ENCODE measurements at regions of chr11 and their contacts with region 1.

Region 1: DNA sequence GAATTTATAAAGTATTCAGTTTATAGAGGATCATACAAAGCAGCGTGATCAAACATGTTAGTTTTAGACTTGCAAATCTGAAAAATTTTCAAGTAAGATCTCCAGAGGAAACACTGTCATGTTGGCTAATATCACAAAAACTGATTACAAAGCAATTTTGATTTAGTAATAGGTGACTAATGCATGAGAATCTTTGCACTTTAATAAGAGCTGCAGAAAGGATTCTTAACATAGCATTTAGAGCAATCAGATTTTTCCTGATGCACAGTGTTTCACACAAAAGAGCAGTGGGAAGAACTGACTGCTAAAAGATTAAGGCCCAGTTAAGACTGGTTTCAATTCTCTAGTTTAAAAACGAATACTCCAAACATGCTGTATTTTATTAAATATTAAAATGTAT is 321.2 kb downstream of the GUCY1A2 start:
- DNase-seq: no peak
- ATAC-seq: no peak
- H3K4me3 ChIP-seq: no peak overlapping the region
- H3K27ac ChIP-seq: no peak overlapping the region
- H3K4me1 ChIP-seq: no peaks in the 10 kb centered on the region
- H3K27me3 ChIP-seq: no peaks in the 10 kb centered on the region
- CTCF ChIP-seq: no peak

Region 2: DNA sequence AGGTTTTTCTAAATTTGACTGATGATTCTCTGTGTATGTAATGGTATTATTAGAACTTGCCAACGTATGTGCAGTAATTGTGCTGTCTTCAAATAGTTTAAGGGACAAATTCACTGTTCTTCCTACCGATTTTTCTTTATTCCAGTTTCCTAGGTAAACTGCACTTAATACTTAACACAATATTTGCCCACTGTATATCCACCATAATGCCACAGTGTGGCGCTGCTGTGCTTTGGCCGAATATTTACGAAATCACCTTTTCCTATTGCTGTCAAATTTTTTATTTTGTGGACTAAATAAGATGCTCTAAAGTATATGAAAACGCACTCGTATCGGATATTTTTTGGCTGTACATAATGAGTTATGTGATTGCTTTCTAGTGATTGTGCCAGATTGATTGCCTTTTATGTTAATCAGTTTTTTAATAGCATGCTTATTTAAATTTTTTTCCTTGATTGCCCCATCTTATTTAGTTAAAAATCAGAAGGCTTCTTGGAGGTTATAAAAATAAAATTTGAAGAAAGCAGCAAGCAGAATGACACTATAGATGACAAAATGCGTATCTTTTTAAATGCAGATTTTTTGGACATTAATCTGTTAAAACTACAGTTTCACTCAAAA is 609.1 kb before region 1 on chr11:
- CTCF ChIA-PET with region 1: no interaction called
- POLR2A ChIA-PET with region 1: no interaction called
- in situ Hi-C with region 1: no loop called
- intact Hi-C with region 1: loop called (anchors 10 kb)
- DNase-seq: peak; percentile 32
- ATAC-seq: 0 out of 2 replicates have a peak, but pooled peaks have one; percentile 72
- H3K4me3 ChIP-seq: no peak overlapping the region
- H3K27ac ChIP-seq: peak overlapping the region; percentile 29; the same call in 1 of the 2 replicates
- H3K4me1 ChIP-seq: peaks cover 20% of the 10 kb centered on the region
- H3K27me3 ChIP-seq: no peaks in the 10 kb centered on the region
- CTCF ChIP-seq: peak; percentile 92; the same call in 1 of the 2 replicates

Region 3: GRCh38 chr11:106228996-106229395 is 468.1 kb before region 1 on chr11:
- CTCF ChIA-PET with region 1: no interaction called
- POLR2A ChIA-PET with region 1: no interaction called
- in situ Hi-C with region 1: loop called (anchors 10 kb)
- intact Hi-C with region 1: no loop called
- DNase-seq: no peak
- ATAC-seq: no peak
- H3K4me3 ChIP-seq: no peak overlapping the region
- H3K27ac ChIP-seq: no peak overlapping the region
- H3K4me1 ChIP-seq: no peaks in the 10 kb centered on the region
- H3K27me3 ChIP-seq: no peaks in the 10 kb centered on the region
- CTCF ChIP-seq: no peak

Region 4: DNA sequence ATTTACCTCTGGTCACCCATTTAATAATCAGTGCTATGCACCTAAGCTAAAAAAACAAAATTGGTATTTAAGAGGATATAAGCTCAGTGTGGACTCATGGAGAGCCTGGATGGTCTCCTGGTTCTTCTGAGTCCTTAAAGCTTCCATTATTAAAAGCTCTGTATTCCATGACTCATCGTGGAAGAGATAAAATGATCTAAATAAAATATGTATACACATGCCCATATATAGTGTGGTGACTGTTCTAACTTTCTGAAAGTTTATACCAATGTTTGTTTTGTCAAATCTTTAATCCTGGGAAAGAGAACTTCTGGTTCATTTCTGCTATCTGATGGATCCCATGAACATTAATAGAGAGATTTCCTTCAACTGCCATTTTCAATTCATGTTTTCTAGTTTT is 54.7 kb before region 1 on chr11:
- CTCF ChIA-PET with region 1: no interaction called
- POLR2A ChIA-PET with region 1: no interaction called
- in situ Hi-C with region 1: no loop called
- intact Hi-C with region 1: no loop called
- DNase-seq: no peak
- ATAC-seq: no peak
- H3K4me3 ChIP-seq: no peak overlapping the region
- H3K27ac ChIP-seq: no peak overlapping the region
- H3K4me1 ChIP-seq: no peaks in the 10 kb centered on the region
- H3K27me3 ChIP-seq: no peaks in the 10 kb centered on the region
- CTCF ChIP-seq: no peak